Activated naive CD8-positive, alpha-beta T cell treated with anti-CD3 and anti-CD28 coated beads, Interleukin-2, amount 10 ng/mL, durations not matched to agents 7 days and 5 days (primary cell): ENCODE measurements at regions of chr1 and their contacts with region 1.

Region 1: GRCh38 chr1:92536980-92537884 is 50.5 kb upstream of the GFI1 start:
- DNase-seq: no peak
- ATAC-seq: peak; percentile 76
- H3K4me3 Mint-ChIP-seq: peak overlapping the region; percentile 78
- H3K27ac Mint-ChIP-seq: peak overlapping the region; percentile 93
- H3K4me1 Mint-ChIP-seq: peaks cover 44% of the 10 kb centered on the region
- H3K27me3 Mint-ChIP-seq: no peaks in the 10 kb centered on the region

Region 2: GRCh38 chr1:92495392-92496063 is 41.7 kb before region 1 on chr1:
- POLR2A ChIA-PET with region 1: no interaction called
- DNase-seq: no peak
- ATAC-seq: peak; percentile 85
- H3K4me3 Mint-ChIP-seq: peak overlapping the region; percentile 60
- H3K27ac Mint-ChIP-seq: peak overlapping the region; percentile 5
- H3K4me1 Mint-ChIP-seq: peaks cover 30% of the 10 kb centered on the region
- H3K27me3 Mint-ChIP-seq: no peaks in the 10 kb centered on the region

Region 3: GRCh38 chr1:92515796-92516201 is 21.4 kb before region 1 on chr1:
- POLR2A ChIA-PET with region 1: no interaction called
- DNase-seq: no peak
- ATAC-seq: no peak
- H3K4me3 Mint-ChIP-seq: no peak overlapping the region
- H3K27ac Mint-ChIP-seq: no peak overlapping the region
- H3K4me1 Mint-ChIP-seq: peaks cover 18% of the 10 kb centered on the region
- H3K27me3 Mint-ChIP-seq: no peaks in the 10 kb centered on the region

Region 4: GRCh38 chr1:92567211-92567868 is 30.1 kb after region 1 on chr1:
- POLR2A ChIA-PET with region 1: no interaction called
- DNase-seq: no peak
- ATAC-seq: no peak
- H3K4me3 Mint-ChIP-seq: no peak overlapping the region
- H3K27ac Mint-ChIP-seq: no peak overlapping the region
- H3K4me1 Mint-ChIP-seq: peaks cover 16% of the 10 kb centered on the region
- H3K27me3 Mint-ChIP-seq: no peaks in the 10 kb centered on the region

Region 5: GRCh38 chr1:92583821-92584760 is 46.9 kb after region 1 on chr1:
- POLR2A ChIA-PET with region 1: interaction called, 28 read pairs
- DNase-seq: no peak
- ATAC-seq: peak; percentile 82
- H3K4me3 Mint-ChIP-seq: peak overlapping the region; percentile 81
- H3K27ac Mint-ChIP-seq: peak overlapping the region; percentile 93
- H3K4me1 Mint-ChIP-seq: peaks cover 38% of the 10 kb centered on the region
- H3K27me3 Mint-ChIP-seq: no peaks in the 10 kb centered on the region